ENCODE measurements at regions of chr10 and their contacts with region 1.

Region 1: DNA sequence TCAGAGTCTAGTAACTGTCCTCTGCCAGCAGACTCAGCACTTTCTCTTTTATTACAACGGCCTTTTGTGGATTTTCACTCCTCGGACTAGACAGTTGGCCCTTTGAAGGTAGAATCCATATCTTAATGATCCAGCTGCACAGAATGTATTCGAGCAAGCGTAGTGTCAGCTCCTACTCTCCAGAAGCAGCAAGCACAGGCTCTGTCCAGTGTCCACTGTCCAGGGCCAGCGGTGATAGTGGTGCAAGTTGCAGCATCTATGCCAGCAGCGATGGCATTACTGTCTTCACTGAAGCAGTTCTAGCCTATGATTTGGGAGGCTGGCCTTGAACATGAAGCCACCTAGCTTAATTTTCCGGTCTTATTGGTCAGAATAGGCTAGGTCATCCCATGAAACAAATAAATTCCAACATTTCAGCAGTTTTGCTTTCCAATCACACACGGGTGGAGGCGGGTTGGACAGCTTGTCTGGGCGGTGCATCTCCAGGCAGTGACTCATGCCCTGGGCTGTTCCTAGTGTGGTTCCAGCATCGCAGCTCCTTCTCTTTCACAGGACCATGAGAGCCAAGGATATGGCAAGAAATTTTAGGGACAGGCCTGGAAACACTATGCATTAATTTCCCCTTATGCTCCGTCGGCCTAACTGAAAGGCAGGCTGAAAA is 108.6 kb upstream of the KCNMA1 start:
- DNase-seq: no peak
- H3K4me3 ChIP-seq: no peak overlapping the region
- CTCF ChIP-seq: no peak

Region 2: DNA sequence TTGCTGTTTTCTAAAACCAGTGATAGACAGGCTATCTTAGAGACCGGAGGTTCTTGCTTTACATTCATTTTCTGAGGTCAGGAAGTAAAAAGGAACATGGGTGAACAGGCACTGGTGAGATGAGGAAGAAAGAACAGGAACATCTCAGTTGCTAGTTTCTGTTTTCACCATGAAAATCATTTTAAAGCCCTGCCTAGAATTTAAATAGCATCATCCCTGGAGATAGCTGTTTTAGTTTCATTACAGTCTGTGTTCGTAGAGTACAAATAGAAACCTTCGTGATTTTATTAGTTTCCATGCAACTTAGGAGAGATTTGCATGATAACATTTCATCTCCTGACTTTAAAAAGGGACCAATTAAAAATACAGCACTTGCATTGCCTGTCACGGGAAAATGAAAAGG is 123.3 kb before region 1 on chr10:
- CTCF ChIA-PET with region 1: no interaction called
- POLR2A ChIA-PET with region 1: no interaction called
- DNase-seq: no peak
- H3K4me3 ChIP-seq: no peak overlapping the region
- CTCF ChIP-seq: no peak

Region 3: DNA sequence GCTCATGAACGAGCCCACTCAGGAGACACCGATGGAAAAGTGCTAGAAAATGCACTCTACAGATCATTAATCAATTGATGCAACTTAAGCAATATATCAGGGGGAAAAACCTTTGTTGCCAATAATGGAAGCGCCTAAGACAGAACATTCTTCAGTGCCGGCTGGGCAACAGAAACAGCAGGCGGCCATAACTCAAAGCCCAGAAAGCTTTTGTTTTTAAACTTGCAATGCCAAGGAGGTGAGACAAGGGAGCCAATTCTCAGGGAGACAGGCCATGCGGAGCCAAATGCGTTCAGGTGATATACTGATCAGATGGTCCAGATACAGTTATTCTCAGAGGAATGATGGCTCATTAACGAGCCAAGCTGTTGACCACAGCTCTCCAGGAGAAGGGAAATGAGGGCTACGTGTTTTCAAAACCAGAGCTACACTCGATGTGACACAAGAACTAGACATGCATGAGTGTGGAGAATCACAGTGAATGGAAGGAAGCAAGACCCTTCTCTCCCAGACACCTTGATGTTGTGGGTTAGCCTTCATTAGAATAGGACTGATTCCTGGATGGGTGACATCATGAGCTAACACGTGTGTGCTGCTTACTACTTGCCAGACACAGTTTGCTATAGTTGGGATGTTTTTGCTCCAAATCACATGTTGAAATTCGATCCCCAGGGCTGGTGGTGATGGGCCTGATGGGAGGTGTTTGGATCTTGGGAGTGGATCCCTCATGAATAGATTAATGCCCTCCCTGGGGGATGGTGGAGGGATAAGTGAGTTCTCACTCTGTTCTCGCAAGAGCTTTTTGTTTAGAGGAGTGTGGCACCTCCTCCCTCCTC is 29.5 kb before region 1 on chr10:
- CTCF ChIA-PET with region 1: interaction called, 14 read pairs
- POLR2A ChIA-PET with region 1: no interaction called
- DNase-seq: no peak
- H3K4me3 ChIP-seq: no peak overlapping the region
- CTCF ChIP-seq: no peak

Region 4: GRCh38 chr10:77756319-77757232 is 10.4 kb after region 1 on chr10:
- CTCF ChIA-PET with region 1: interaction called, 13 read pairs
- POLR2A ChIA-PET with region 1: no interaction called
- DNase-seq: no peak
- H3K4me3 ChIP-seq: no peak overlapping the region
- CTCF ChIP-seq: peak; percentile 79

Region 5: GRCh38 chr10:77774940-77775391 is 28.8 kb after region 1 on chr10:
- CTCF ChIA-PET with region 1: no interaction called
- POLR2A ChIA-PET with region 1: no interaction called
- DNase-seq: no peak
- H3K4me3 ChIP-seq: no peak overlapping the region
- CTCF ChIP-seq: no peak